ENCODE measurements at regions of chr14 and their contacts with region 1.

Region 1: DNA sequence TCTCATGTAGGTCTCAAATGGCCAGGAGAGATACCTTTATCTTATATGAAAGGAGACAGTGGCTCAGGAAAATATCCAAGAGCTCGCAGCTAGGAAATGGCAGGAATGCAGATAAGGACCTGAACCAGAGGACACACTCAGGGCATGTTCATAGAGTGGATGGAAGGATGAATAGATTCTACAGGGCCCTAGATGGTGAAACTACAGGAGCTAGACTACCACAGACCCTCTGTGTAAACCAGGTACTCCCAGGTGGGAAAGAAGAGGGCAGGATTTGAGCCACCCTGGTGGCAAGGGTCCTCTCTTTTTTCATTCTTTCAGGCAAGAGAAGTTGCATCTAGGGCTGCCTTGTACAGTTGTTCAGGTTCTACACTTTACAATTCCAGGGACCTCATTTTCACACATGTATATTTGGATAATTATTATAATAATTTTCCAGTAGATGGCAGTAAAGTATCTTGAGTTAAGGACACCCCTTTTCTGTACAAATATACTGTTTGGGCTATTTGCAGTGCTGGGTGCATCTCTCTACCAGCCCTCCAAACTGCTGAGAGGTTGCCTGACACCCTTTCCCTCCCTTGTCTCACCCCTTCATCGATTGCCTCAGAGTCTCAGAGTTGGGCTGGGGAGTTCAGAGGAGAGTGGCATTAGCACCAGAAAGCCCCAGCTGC is 10.5 kb upstream of the ZDHHC22 start:
- DNase-seq: peak; percentile 65
- H3K4me3 ChIP-seq: no peak overlapping the region
- H3K27ac ChIP-seq: no peak overlapping the region
- H3K4me1 ChIP-seq: peaks cover 7% of the 10 kb centered on the region
- CTCF ChIP-seq: peak; percentile 67

Region 2: GRCh38 chr14:76576047-76576741 is 575.9 kb before region 1 on chr14:
- CTCF ChIA-PET with region 1: no interaction called
- POLR2A ChIA-PET with region 1: no interaction called
- intact Hi-C with region 1: no loop called
- DNase-seq: no peak
- H3K4me3 ChIP-seq: no peak overlapping the region
- H3K27ac ChIP-seq: no peak overlapping the region
- H3K4me1 ChIP-seq: no peaks in the 10 kb centered on the region
- CTCF ChIP-seq: no peak

Region 3: GRCh38 chr14:76876076-76876475 is 276.0 kb before region 1 on chr14:
- CTCF ChIA-PET with region 1: interaction called, 4 read pairs
- POLR2A ChIA-PET with region 1: no interaction called
- intact Hi-C with region 1: loop called (anchors 10 kb)
- DNase-seq: peak; percentile 54
- H3K4me3 ChIP-seq: no peak overlapping the region
- H3K27ac ChIP-seq: no peak overlapping the region
- H3K4me1 ChIP-seq: no peaks in the 10 kb centered on the region
- CTCF ChIP-seq: peak; percentile 87

Region 4: DNA sequence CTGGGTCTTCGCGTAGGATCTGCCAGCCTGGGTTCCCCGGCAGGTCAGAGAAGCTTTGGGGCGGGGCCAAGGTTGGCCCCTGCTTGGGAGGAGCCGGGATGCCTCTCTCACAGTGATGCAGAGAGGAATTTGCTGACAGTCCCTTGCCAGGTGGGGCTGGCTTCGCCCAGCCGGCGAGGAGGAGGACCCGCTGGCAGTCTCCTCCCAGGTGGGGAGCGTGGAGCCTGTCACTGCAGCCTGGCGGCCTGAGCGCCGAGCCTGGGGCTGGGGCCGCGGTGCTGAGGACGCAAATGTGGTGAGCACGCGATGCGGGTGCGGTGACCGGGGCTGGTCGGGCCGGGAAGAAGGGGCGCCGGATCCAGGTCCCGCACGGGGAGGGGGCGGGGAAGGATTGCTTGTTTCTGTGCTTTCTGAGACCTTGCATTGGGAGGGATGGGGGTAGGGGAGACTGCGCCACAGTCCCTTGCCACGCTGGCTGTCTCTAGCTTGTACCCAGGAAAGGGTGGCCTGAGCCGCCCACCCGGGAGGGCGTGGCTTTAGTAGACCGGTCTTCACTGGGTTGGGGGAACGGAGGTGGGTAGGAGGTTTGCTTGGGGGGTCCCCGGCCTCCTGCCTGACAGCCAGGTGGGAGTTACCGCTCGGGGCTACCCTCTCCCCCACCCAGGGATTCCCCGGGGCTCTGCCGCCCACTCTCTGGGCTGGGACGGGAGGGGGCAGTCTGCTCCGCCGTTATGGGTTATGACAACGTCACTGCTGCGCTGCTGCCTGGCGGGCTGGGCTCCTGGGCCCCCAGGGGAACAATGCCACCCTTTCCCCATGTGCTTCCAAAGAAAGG is 29.8 kb after region 1 on chr14 and contains the start of gene TMEM63C:
- CTCF ChIA-PET with region 1: interaction called, 3 read pairs
- POLR2A ChIA-PET with region 1: no interaction called
- intact Hi-C with region 1: loop called (anchors 2 kb)
- DNase-seq: peak; percentile 97
- H3K4me3 ChIP-seq: peak within 1 kb of the TSS; percentile 76
- H3K27ac ChIP-seq: no peak within 1 kb of the TSS
- H3K4me1 ChIP-seq: peaks cover 24% of the 10 kb centered on the region
- CTCF ChIP-seq: peak; percentile 33; the same call in 1 of the 2 replicates
- total RNA-seq, gene TMEM63C: 0.41 and 0.79 TPM in 2 replicates

Region 5: GRCh38 chr14:77212943-77213678 is 61.1 kb after region 1 on chr14:
- CTCF ChIA-PET with region 1: interaction called, 6 read pairs
- POLR2A ChIA-PET with region 1: interaction called, 4 read pairs
- intact Hi-C with region 1: loop called (anchors 1 kb)
- DNase-seq: peak; percentile 67
- H3K4me3 ChIP-seq: no peak overlapping the region
- H3K27ac ChIP-seq: no peak overlapping the region
- H3K4me1 ChIP-seq: peaks cover 7% of the 10 kb centered on the region
- CTCF ChIP-seq: peak; percentile 85

Region 6: DNA sequence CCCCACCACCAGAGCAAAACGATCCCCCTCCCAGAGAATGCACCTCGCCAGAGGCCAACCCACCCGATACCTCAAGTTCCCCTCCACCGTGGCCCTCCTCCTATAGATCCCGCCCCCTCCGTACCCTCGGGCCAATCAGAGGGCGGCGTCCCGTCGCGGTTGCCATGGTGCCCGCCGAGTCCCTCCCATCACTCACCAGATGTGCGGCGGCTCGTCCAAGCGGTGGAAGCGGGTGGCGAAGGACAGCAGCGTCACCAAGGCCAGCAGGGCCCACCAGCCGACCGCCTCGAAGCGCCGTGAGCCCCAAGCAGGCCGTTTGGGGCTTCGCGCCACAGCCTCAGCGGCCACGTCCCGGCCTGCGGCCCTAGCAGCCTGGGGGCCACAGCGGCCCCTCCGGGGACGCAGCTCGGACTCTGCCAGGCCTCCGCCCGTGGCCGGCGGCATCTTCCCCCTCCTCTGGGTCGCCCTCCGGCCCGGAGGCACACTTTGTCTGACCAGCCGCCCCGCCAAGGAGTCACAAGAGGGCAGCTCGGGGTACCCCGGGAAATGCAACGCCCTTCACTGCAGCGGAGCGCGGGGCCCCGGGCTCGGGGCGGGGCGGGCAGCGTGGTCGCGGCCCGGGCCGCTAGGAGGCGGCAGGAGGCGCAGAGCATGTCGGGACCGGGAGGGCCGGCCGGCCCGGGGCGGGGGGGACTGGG is 168.3 kb after region 1 on chr14 and contains the start of gene POMT2:
- CTCF ChIA-PET with region 1: interaction called, 4 read pairs
- POLR2A ChIA-PET with region 1: interaction called, 3 read pairs
- intact Hi-C with region 1: loop called (anchors 1 kb)
- DNase-seq: peak; percentile 92
- H3K4me3 ChIP-seq: peak within 1 kb of the TSS; percentile 81
- H3K27ac ChIP-seq: peak within 1 kb of the TSS; percentile 80
- H3K4me1 ChIP-seq: peaks cover 25% of the 10 kb centered on the region
- CTCF ChIP-seq: peak; percentile 51; the same call in 1 of the 2 replicates
- total RNA-seq, gene POMT2: 5.9 and 8.2 TPM in 2 replicates

Region 7: DNA sequence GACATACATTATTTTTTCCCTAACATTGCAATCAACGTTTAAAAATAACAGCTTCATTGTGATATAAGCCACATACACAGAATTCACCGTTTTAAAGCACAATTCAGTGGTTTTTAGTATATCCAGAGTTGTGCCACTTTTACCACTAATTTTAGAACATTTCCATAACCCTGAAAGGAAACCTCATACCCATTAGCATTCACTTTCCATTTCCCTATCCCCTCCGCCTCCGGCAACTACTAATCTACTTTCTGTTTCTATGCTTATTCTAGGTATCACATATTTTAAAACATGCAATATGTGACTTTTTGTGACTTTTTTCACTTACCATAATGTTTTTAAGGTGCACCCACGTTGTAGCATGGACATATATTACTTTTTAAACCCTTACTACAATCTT is 402.2 kb after region 1 on chr14:
- CTCF ChIA-PET with region 1: no interaction called
- POLR2A ChIA-PET with region 1: no interaction called
- intact Hi-C with region 1: loop called (anchors 5 kb)
- DNase-seq: no peak
- H3K4me3 ChIP-seq: no peak overlapping the region
- H3K27ac ChIP-seq: no peak overlapping the region
- H3K4me1 ChIP-seq: no peaks in the 10 kb centered on the region
- CTCF ChIP-seq: no peak